HepG2 (cell line): ENCODE measurements at regions of chr4 and their contacts with region 1.

Region 1: DNA sequence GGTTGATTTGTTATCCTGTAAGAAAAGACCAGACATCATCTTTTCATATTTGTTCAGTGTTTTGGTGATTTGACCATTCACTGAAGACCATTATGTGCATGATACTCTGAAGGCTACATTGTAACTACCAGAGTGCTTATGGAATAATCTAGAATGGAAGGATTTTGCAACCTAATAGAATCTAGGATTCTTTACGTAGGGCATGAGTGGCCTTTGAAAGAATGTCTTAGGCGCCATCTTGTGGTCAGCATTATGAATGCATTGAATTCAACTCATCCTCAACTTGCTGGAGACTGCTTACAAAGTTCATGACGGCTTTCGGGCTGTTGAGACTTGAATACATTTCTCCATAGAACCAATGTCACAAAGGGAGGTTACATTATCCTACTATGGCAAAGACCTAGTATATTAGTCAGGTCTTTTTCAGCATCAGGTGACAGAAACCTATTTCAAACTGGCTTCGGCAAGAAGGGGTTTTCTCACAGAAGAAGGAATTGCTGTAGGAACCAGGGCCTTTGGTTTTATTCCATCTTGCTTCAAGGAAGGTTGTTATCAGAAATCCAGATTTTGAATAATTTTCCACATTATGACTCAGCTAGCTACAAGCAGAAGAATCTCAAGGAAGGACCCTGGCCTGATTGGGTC is 104.1 kb downstream of the GPAT3 start:
- DNase-seq: peak; percentile 71
- ATAC-seq: peak; percentile 85
- H3K4me3 ChIP-seq: no peak overlapping the region
- H3K27ac ChIP-seq: no peak overlapping the region
- H3K4me1 ChIP-seq: no peaks in the 10 kb centered on the region
- H3K27me3 ChIP-seq: no peaks in the 10 kb centered on the region; a peak in 1 of 5 replicates
- CTCF ChIP-seq: peak; percentile 87
- EP300 ChIP-seq: no peak
- POLR2A ChIP-seq: no peak
- RAD21 ChIP-seq: peak; percentile 82

Region 2: GRCh38 chr4:83217721-83218522 is 422.0 kb before region 1 on chr4:
- CTCF ChIA-PET with region 1: no interaction called
- POLR2A ChIA-PET with region 1: no interaction called
- in situ Hi-C with region 1: no loop called
- intact Hi-C with region 1: no loop called
- DNase-seq: no peak
- ATAC-seq: no peak
- H3K4me3 ChIP-seq: no peak overlapping the region
- H3K27ac ChIP-seq: no peak overlapping the region
- H3K4me1 ChIP-seq: no peaks in the 10 kb centered on the region
- H3K27me3 ChIP-seq: no peaks in the 10 kb centered on the region; a peak in 1 of 5 replicates
- CTCF ChIP-seq: no peak
- EP300 ChIP-seq: no peak
- POLR2A ChIP-seq: no peak
- RAD21 ChIP-seq: no peak

Region 3: GRCh38 chr4:83284193-83285054 is 355.5 kb before region 1 on chr4 and contains the start of gene COQ2:
- CTCF ChIA-PET with region 1: no interaction called
- POLR2A ChIA-PET with region 1: no interaction called
- in situ Hi-C with region 1: no loop called
- intact Hi-C with region 1: loop called (anchors 5 kb)
- DNase-seq: peak; percentile 86
- ATAC-seq: peak; percentile 96
- H3K4me3 ChIP-seq: peak within 1 kb of the TSS; percentile 63 to 78 (median 73)
- H3K27ac ChIP-seq: peak within 1 kb of the TSS; percentile 87
- H3K4me1 ChIP-seq: peaks cover 41% of the 10 kb centered on the region
- H3K27me3 ChIP-seq: no peaks in the 10 kb centered on the region
- CTCF ChIP-seq: peak; percentile 48
- EP300 ChIP-seq: 0 out of 4 replicates have a peak, but pooled peaks of 1 of the 2 experiments have one; percentile 4
- POLR2A ChIP-seq: peak; percentile 83
- RAD21 ChIP-seq: peak; percentile 71
- total RNA-seq, gene COQ2: 16.4 and 17.3 TPM in 2 replicates

Region 4: DNA sequence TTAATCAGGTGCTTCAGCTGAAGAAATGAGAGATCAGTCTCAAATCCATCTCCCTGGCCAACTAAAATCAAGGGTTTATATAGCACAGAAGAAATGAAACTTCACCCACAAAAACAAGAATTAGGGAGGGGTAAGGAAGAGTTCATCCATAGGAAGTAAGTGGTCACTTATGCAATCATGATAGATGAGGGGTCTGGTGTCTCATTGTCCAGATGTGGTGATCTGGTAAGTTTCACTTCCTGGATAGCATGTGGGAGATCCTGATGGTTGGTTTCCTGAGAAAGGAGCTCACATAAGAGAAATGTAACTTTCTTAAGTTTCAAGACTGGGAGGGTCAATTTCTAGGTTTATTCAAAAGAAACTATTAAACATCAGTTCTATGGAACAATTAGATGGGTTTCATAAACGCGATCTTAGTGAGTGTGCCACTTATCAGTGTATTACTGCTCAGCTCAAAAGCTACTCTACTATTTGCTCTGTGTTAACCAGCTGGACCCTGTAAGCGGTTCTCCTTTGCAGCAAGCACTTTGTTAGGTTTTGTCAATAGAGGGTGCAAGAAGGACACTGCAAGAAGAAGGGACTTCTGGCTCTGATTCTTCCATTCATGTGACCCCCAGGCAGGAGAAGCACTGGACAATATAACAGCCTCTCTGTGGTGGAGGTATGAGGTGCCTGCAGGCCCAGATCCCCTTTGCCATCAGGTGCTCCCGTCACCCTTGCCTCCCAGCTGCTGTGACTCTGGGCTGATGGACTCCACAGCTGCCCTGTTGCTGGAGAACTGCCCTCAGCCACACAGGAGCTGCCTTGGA is 269.9 kb before region 1 on chr4:
- CTCF ChIA-PET with region 1: no interaction called
- POLR2A ChIA-PET with region 1: no interaction called
- in situ Hi-C with region 1: loop called (anchors 25 kb)
- intact Hi-C with region 1: loop called (anchors 2 kb)
- DNase-seq: peak; percentile 44
- ATAC-seq: peak; percentile 90
- H3K4me3 ChIP-seq: no peak overlapping the region; a peak in 1 of 6 replicates
- H3K27ac ChIP-seq: no peak overlapping the region
- H3K4me1 ChIP-seq: peaks cover 47% of the 10 kb centered on the region
- H3K27me3 ChIP-seq: no peaks in the 10 kb centered on the region
- CTCF ChIP-seq: peak; percentile 69
- EP300 ChIP-seq: no peak
- POLR2A ChIP-seq: no peak
- RAD21 ChIP-seq: no peak

Region 5: DNA sequence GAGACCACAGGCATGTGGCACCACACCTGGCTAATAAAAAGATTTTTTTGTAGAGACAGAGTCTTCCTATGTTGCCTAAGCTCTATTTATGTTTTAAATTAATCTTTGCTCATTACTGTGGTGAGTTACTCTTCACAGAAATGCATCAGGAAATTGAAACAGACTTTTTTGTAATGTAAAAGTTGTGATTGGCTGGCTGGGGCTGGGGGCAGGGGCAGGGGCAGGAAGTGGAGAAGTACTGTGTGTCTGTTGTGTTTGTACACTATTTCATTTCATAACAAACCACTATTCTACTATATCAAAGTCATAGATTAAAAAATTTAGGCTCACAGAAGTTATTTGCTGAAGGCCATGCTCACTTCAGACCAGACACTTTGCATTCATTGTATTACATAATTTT is 136.0 kb before region 1 on chr4:
- CTCF ChIA-PET with region 1: interaction called, 51 read pairs
- POLR2A ChIA-PET with region 1: no interaction called
- in situ Hi-C with region 1: no loop called
- intact Hi-C with region 1: loop called (anchors 1 kb)
- DNase-seq: no peak
- ATAC-seq: no peak
- H3K4me3 ChIP-seq: no peak overlapping the region
- H3K27ac ChIP-seq: no peak overlapping the region
- H3K4me1 ChIP-seq: no peaks in the 10 kb centered on the region
- H3K27me3 ChIP-seq: peaks cover 0 to 5% of the 10 kb centered on the region in 2 experiments; a peak in 2 of 5 replicates
- CTCF ChIP-seq: no peak
- EP300 ChIP-seq: no peak
- POLR2A ChIP-seq: no peak
- RAD21 ChIP-seq: no peak

Region 6: GRCh38 chr4:83993774-83994173 is 353.8 kb after region 1 on chr4:
- CTCF ChIA-PET with region 1: no interaction called
- POLR2A ChIA-PET with region 1: no interaction called
- in situ Hi-C with region 1: no loop called
- intact Hi-C with region 1: loop called (anchors 10 kb)
- DNase-seq: no peak
- ATAC-seq: peak; percentile 75
- H3K4me3 ChIP-seq: no peak overlapping the region
- H3K27ac ChIP-seq: no peak overlapping the region
- H3K4me1 ChIP-seq: no peaks in the 10 kb centered on the region
- H3K27me3 ChIP-seq: no peaks in the 10 kb centered on the region; a peak in 1 of 5 replicates
- CTCF ChIP-seq: peak; percentile 42
- EP300 ChIP-seq: no peak
- POLR2A ChIP-seq: no peak
- RAD21 ChIP-seq: no peak